ENCODE measurements at regions of chr1 and their contacts with region 1.

Region 1: DNA sequence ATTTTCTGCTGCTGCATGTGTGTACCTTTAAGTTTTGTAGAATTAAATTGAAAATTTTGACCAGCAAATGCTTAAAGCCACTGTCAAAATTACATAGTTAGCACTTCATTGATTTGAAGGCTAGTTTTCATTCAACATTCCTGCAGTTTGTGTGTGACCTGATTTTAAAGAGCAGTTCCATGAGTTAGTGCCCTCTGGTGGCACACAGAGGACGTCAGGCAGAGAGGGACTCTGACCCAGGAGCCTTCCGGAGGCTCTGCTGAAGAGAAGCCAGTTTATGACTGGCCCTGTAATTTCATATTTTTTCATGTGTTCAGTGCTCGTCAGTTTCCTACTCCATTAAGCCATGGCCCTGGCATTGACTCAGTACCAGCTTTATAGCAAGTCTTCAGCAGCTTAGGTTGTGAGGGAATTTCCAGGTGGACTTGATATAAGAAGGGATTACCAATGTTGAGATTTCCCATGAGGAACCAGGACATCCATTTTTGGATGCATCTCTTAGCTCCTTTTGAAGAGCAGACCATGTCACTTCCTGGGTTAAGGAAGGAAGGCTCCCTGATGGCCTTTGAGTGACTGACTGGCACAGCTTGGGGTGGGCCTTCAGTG is 104.7 kb downstream of the CAMTA1 start:
- DNase-seq: peak in 1 of 2 donors; percentile 25
- ATAC-seq: peak; percentile 71 to 73
- H3K4me3 ChIP-seq: no peak overlapping the region
- H3K27ac ChIP-seq: no peak overlapping the region
- H3K4me1 ChIP-seq: no peaks in the 10 kb centered on the region
- H3K27me3 ChIP-seq: no peaks in the 10 kb centered on the region
- CTCF ChIP-seq: peak; percentile 45 to 80 (median 70)
- POLR2A ChIP-seq: no peak

Region 2: DNA sequence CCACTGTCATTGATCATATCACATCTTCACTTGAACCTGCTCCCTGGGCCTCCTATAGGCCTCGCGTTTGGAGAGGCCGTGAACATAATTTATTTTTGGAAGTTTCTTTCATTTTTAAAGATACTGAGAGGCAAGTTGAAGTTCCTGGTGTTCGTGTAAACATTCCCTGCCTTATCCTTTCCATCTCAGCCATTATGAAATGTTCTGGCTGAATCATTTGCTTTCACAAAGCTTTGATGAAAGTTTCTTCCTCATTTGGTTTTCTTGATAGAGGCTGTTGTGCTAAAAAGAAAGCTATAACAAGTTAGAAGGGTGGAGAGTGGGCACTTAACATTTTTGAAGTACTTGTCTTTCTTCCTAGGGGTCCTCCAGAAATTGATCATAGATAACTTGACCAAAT is 89.2 kb before region 1 on chr1:
- in situ Hi-C with region 1: loop called in 2 of 4 experiments (anchors 10 kb)
- intact Hi-C with region 1: no loop called
- DNase-seq: no peak
- ATAC-seq: no peak
- H3K4me3 ChIP-seq: no peak overlapping the region
- H3K27ac ChIP-seq: peak overlapping the region in 2 of 4 donors; percentile 17 to 39
- H3K4me1 ChIP-seq: peaks cover 31 to 48% of the 10 kb centered on the region in 2 donors
- H3K27me3 ChIP-seq: no peaks in the 10 kb centered on the region
- CTCF ChIP-seq: no peak
- POLR2A ChIP-seq: no peak